ENCODE measurements at regions of chr10 and their contacts with region 1.

Region 1: DNA sequence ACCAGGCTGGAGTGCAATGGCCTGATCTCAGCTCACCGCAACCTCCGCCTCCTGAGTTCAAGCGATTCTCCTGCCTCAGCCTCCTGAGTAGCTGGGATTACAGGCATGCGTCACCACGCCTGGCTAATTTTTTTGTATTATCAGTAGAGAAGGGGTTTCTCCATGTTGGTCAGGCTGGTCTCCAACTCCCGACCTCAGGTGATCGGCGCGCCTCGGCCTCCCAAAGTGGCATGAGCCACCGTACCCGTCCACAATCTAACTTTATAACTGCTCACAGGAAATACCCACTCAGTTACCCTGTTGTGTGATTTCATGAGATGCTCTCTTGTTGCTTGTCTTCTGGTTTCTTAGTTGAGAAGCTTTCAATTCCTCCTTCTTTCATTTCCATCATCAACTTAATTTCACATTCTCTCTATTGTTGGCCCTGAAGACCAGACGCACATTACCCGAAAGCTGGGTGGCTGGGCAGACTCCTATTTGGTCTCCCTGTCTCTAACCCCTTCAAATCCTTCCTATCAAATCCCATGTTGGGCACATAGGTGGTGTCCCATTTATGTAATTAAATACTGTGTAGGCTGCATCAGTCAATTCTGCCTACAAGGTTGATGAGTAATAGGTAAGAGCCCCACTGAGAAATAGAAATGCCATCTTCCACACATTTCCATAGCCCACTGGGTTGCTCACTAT is 1.1 kb upstream of the GSTO2 start:
- DNase-seq: no peak
- ATAC-seq: no peak
- H3K4me3 ChIP-seq: peak overlapping the region; percentile 62 to 91
- H3K27ac ChIP-seq: peak overlapping the region; percentile 88
- H3K4me1 ChIP-seq: peaks cover 13% of the 10 kb centered on the region
- H3K27me3 ChIP-seq: no peaks in the 10 kb centered on the region
- CTCF ChIP-seq: no peak

Region 2: DNA sequence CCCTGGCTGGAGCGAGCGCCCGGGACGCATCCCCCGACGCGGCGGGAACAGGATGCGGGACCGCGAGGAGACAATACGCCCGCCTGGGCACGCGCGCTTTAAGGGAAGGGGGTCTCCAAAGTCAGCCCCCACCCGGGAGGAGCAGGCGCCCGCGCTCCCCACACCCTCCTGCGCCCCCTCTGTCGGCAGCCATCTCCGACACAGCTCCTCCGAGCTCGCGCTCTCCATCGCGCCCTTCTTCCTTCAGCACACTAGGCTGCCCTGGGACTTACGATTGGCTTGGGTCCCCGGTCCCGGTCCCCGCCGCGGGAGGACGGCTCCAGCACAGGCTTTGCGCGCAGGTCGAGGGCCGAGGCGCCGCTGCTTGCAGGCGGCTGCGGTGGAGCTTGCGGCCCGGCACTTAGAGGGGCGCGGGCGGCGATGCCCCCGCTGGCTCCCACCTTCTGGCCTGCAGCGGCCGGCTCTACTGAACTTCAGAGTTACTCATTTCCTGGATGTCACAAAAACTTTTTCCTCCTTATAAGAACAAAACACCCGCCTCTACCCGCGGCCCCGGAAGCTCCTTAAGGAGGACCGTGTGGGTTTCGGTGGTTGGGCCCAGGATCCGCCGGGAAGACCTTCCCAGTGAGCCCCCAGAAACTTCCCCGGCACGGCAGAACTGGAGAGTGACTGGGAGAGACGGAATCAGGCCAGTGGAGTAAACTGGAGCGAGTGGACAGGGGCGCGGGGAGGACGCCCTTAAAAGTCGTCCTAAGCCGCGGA is 70.3 kb after region 1 on chr10 and contains the start of gene ITPRIP:
- CTCF ChIA-PET with region 1: interaction called, 10 read pairs
- POLR2A ChIA-PET with region 1: no interaction called
- in situ Hi-C with region 1: no loop called
- intact Hi-C with region 1: no loop called
- DNase-seq: no peak
- ATAC-seq: peak; percentile 78
- H3K4me3 ChIP-seq: peak within 1 kb of the TSS; percentile 83 to 86
- H3K27ac ChIP-seq: peak within 1 kb of the TSS; percentile 99
- H3K4me1 ChIP-seq: peaks cover 59% of the 10 kb centered on the region
- H3K27me3 ChIP-seq: no peaks in the 10 kb centered on the region
- CTCF ChIP-seq: peak; percentile 45; the same call in 1 of the 2 replicates
- total RNA-seq, gene ITPRIP: 55.0 TPM